ENCODE measurements at regions of chr1 and their contacts with region 1.

Region 1: GRCh38 chr1:212967801-212968200 is 17.5 kb downstream of the VASH2 start:
- DNase-seq: no peak
- H3K4me3 ChIP-seq: no peak overlapping the region
- H3K27ac ChIP-seq: no peak overlapping the region
- H3K4me1 ChIP-seq: no peaks in the 10 kb centered on the region
- H3K27me3 ChIP-seq: peaks cover 0 to 6% of the 10 kb centered on the region in 2 experiments
- CTCF ChIP-seq: peak; percentile 34 to 58
- POLR2A ChIP-seq: no peak

Region 2: GRCh38 chr1:212641956-212642355 is 325.8 kb before region 1 on chr1:
- CTCF ChIA-PET with region 1: no interaction called
- POLR2A ChIA-PET with region 1: no interaction called
- dilution Hi-C with region 1: no loop called
- intact Hi-C with region 1: no loop called
- DNase-seq: no peak
- H3K4me3 ChIP-seq: no peak overlapping the region
- H3K27ac ChIP-seq: no peak overlapping the region
- H3K4me1 ChIP-seq: peaks cover 15% of the 10 kb centered on the region
- H3K27me3 ChIP-seq: peaks cover 0 to 5% of the 10 kb centered on the region in 2 experiments
- CTCF ChIP-seq: no peak
- POLR2A ChIP-seq: no peak

Region 3: GRCh38 chr1:212671342-212672031 is 296.3 kb before region 1 on chr1:
- CTCF ChIA-PET with region 1: no interaction called
- POLR2A ChIA-PET with region 1: no interaction called
- dilution Hi-C with region 1: no loop called
- intact Hi-C with region 1: no loop called
- DNase-seq: no peak
- H3K4me3 ChIP-seq: no peak overlapping the region
- H3K27ac ChIP-seq: no peak overlapping the region
- H3K4me1 ChIP-seq: peaks cover 27% of the 10 kb centered on the region
- H3K27me3 ChIP-seq: peaks cover 22 to 23% of the 10 kb centered on the region in 2 experiments
- CTCF ChIP-seq: no peak
- POLR2A ChIP-seq: no peak

Region 4: DNA sequence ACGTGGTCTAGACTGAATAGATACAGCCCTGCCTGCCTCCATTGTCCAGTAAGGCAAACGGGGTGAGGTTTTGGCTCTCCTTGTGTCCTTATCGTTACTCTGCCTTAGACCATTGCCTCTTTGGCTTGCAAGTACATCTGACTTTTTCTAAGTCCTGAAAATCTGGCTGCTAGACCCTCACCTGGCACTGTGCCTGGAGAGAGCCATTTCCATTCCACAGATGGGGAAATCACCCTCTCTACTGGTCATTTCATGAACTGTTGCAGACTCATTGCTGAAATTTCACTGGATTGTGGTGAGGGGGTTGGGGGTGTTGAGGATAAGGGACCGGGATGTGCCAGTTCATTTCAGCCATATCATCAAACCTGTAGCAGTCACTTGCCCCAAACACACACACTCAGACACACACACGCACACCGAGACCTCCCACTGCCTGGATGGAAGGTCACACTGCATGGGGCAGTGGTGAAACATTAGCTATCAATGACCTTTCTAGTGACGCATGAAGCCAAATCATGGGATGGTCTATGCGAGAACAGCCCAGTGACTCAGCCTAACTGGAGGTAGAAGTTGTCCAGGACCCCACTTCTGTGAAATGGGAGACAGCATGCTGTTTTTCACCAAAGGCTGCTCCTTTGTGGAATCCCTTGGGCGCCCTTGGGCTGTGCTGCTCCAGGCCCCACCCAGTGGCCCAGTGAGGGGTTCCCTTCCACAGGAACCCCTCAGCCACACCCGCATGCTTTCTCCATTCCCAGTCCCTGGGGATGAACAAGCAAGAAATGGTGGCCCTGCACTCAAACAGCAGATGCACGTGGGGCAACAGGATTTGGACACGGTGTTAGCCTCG is 52.3 kb before region 1 on chr1:
- CTCF ChIA-PET with region 1: no interaction called
- POLR2A ChIA-PET with region 1: no interaction called
- dilution Hi-C with region 1: no loop called
- intact Hi-C with region 1: no loop called
- DNase-seq: peak; percentile 56
- H3K4me3 ChIP-seq: no peak overlapping the region
- H3K27ac ChIP-seq: no peak overlapping the region
- H3K4me1 ChIP-seq: no peaks in the 10 kb centered on the region
- H3K27me3 ChIP-seq: peaks cover 0 to 12% of the 10 kb centered on the region in 2 experiments
- CTCF ChIP-seq: peak; percentile 27 to 45
- POLR2A ChIP-seq: no peak

Region 5: GRCh38 chr1:212950243-212951125 is 17.3 kb before region 1 on chr1 and contains the start of gene VASH2:
- CTCF ChIA-PET with region 1: interaction called, 11 read pairs
- POLR2A ChIA-PET with region 1: no interaction called
- dilution Hi-C with region 1: no loop called
- intact Hi-C with region 1: loop called (anchors 2 kb)
- DNase-seq: peak; percentile 83
- H3K4me3 ChIP-seq: peak within 1 kb of the TSS; percentile 20 to 60 (median 48)
- H3K27ac ChIP-seq: no peak within 1 kb of the TSS
- H3K4me1 ChIP-seq: peaks cover 9% of the 10 kb centered on the region
- H3K27me3 ChIP-seq: peaks cover 15 to 17% of the 10 kb centered on the region in 2 experiments
- CTCF ChIP-seq: peak in 1 of 2 donors; percentile 5
- POLR2A ChIP-seq: no peak
- total RNA-seq, gene VASH2: 1.4 and 2.9 TPM in 2 replicates

Region 6: GRCh38 chr1:212979340-212980122 is 11.7 kb after region 1 on chr1:
- CTCF ChIA-PET with region 1: interaction called, 10 read pairs
- POLR2A ChIA-PET with region 1: no interaction called
- dilution Hi-C with region 1: no loop called
- intact Hi-C with region 1: no loop called
- DNase-seq: no peak
- H3K4me3 ChIP-seq: no peak overlapping the region
- H3K27ac ChIP-seq: no peak overlapping the region
- H3K4me1 ChIP-seq: no peaks in the 10 kb centered on the region
- H3K27me3 ChIP-seq: no peaks in the 10 kb centered on the region
- CTCF ChIP-seq: no peak
- POLR2A ChIP-seq: no peak

Region 7: GRCh38 chr1:213947200-213947775 is 979.5 kb after region 1 on chr1:
- CTCF ChIA-PET with region 1: no interaction called
- POLR2A ChIA-PET with region 1: no interaction called
- dilution Hi-C with region 1: no loop called
- intact Hi-C with region 1: no loop called
- DNase-seq: no peak
- H3K4me3 ChIP-seq: no peak overlapping the region
- H3K27ac ChIP-seq: no peak overlapping the region
- H3K4me1 ChIP-seq: no peaks in the 10 kb centered on the region
- H3K27me3 ChIP-seq: peaks cover 0 to 4% of the 10 kb centered on the region in 2 experiments
- CTCF ChIP-seq: no peak
- POLR2A ChIP-seq: no peak